Right ventricle myocardium superior (tissue), 1 donor: ENCODE measurements at regions of chr16 and their contacts with region 1.

Region 1: DNA sequence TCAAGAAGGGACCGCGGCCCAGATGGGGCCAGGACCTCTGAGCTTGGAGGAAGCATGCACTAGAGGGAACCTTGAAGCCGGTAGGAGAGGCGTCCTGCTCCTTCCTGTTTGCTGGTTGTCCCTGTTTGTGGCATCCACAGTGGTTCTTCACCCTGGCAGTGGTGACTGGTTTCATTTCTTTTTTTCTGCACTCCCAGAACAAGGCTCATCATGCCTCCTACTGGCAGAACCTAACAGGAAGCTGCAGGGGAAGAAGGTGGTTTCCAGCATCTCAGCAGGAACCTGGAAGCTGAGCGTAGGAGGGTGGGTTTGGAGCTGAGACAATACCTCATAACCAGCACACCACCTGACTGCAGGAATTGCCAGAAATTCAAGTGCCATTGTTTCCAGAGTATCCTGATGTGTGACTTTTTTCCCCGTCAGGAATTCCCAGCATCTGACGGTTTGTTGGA is 5.8 kb downstream of the TMEM231 start:
- DNase-seq: no peak
- ATAC-seq: peak; percentile 35

Region 2: DNA sequence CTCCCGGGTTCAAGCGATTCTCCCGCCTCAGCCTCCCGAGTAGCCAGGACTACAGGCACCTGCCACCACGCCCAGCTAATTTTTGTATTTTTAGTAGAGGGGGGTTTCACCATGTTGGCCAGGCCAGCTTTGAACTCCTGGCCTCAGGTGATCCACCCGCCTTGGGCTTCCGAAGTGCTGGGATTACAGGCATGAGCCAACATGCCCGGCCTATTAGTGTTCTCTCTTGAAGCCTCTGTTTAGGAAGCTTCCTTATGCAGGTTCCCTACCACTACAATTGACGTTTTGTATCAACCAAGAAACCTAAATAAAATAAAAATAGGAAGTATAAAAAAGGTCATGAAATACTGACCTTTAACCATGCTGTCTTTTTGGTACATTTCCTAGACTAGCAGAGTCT is 30.4 kb before region 1 on chr16:
- intact Hi-C with region 1: loop called (anchors 5 kb)
- DNase-seq: no peak
- ATAC-seq: no peak